ENCODE measurements at regions of chr16 and their contacts with region 1.

Region 1: GRCh38 chr16:57906382-57907316 is 64.3 kb downstream of the CNGB1 start:
- DNase-seq: peak in 2 of 3 donors; percentile 61 to 64
- H3K4me3 ChIP-seq: peak overlapping the region in 1 of 7 experiments; percentile 36
- H3K27ac ChIP-seq: no peak overlapping the region
- H3K4me1 ChIP-seq: peaks cover 0 to 7% (median 2%) of the 10 kb centered on the region in 4 experiments
- H3K27me3 ChIP-seq: peaks cover 0 to 2% (median 0%) of the 10 kb centered on the region in 5 experiments

Region 2: DNA sequence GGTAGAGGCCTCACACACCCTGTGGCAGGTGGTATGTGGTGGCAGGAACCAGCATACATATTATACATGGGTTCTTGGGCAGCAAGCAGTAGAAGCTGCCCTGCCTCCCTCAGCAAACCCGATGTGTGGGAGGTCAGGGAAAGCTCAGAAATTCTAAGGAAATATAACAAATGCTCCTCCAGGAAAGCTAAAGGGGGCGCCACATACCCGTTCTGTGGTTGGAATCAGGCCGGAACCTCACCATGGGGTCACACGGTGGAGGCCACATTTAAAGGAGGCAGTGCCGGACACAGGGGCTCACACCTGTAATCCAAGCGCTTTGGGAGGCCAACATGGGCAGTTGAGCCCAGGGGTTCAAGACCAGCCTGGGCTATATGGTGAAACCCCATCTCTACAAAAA is 183.5 kb before region 1 on chr16:
- CTCF ChIA-PET with region 1: no interaction called
- POLR2A ChIA-PET with region 1: no interaction called
- DNase-seq: no peak
- H3K4me3 ChIP-seq: no peak overlapping the region
- H3K27ac ChIP-seq: no peak overlapping the region
- H3K4me1 ChIP-seq: peaks cover 0 to 45% (median 10%) of the 10 kb centered on the region in 4 experiments
- H3K27me3 ChIP-seq: no peaks in the 10 kb centered on the region

Region 3: DNA sequence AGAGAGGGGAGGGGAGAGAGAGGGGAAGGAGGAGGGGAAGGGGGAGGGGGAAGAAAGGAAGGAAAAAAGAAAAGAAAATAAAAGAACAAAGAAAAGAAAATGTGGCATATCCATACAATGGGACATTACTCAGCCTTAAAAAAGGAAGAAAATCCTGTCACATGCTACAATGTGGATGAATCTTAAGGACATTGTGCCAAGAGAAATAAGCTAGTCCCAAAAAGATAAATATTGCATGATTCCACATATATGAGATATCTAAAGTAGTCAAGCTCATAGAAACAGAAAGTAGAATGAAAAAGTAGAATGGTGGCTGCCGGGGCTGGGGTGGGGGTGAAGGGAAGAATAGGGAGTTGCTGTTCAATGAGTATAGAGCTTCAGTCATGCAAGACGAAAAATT is 23.9 kb after region 1 on chr16:
- CTCF ChIA-PET with region 1: interaction called, 11 read pairs
- POLR2A ChIA-PET with region 1: no interaction called
- DNase-seq: no peak
- H3K4me3 ChIP-seq: no peak overlapping the region
- H3K27ac ChIP-seq: no peak overlapping the region
- H3K4me1 ChIP-seq: peaks cover 0 to 5% (median 2%) of the 10 kb centered on the region in 4 experiments
- H3K27me3 ChIP-seq: no peaks in the 10 kb centered on the region

Region 4: GRCh38 chr16:57994778-57995177 is 88.1 kb after region 1 on chr16:
- CTCF ChIA-PET with region 1: interaction called, 61 read pairs
- POLR2A ChIA-PET with region 1: no interaction called
- DNase-seq: peak; percentile 69 to 84 (median 83)
- H3K4me3 ChIP-seq: no peak overlapping the region
- H3K27ac ChIP-seq: no peak overlapping the region
- H3K4me1 ChIP-seq: peaks cover 4 to 28% (median 23%) of the 10 kb centered on the region in 4 experiments
- H3K27me3 ChIP-seq: no peaks in the 10 kb centered on the region

Region 5: GRCh38 chr16:58000706-58001676 is 94.3 kb after region 1 on chr16 and contains the start of gene USB1:
- CTCF ChIA-PET with region 1: interaction called, 61 read pairs
- POLR2A ChIA-PET with region 1: no interaction called
- DNase-seq: peak; percentile 92 to 94 (median 94)
- H3K4me3 ChIP-seq: peak within 1 kb of the TSS; percentile 70 to 89 (median 80)
- H3K27ac ChIP-seq: peak within 1 kb of the TSS in 1 of 2 experiments; percentile 77
- H3K4me1 ChIP-seq: peaks cover 4 to 35% (median 24%) of the 10 kb centered on the region in 4 experiments
- H3K27me3 ChIP-seq: no peaks in the 10 kb centered on the region

Region 6: DNA sequence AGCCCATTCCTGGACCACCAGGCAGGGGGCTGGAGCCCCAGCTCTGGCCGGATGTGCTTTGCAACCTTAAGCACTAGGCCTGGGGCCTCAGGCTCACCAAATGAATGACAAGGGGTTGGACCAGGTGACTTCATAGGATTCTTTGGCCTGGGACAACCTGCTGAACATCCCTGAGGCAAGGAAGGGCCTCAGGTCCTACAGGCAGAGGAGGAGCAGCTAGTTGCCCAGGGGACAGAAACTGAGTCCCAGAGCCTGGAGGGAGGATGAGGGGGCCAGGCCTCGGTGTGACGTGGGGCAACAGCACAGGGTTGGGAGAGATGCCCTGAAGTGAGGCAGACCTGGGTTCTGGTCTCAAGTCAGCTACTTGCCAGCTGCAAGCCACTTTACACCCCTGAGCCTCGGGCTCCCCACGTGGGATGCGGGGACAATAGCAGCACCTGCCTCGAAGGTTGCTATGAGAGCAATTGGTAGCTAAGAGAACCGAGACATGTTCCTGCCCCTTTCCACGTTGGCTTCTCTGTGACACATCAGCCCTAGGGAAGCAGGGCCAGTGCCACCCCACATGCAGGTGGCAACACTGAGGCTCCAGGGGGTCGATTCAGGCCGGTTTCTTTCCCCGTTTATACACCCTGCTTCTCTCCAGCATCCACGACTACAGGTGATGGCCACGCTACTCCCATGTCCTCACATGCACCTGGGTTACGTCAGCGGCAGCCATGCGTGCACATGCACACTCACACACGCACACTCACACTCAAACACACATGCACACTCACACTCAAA is 180.0 kb after region 1 on chr16:
- CTCF ChIA-PET with region 1: no interaction called
- POLR2A ChIA-PET with region 1: no interaction called
- DNase-seq: peak in 1 of 3 donors; percentile 22
- H3K4me3 ChIP-seq: no peak overlapping the region
- H3K27ac ChIP-seq: no peak overlapping the region
- H3K4me1 ChIP-seq: peaks cover 0 to 2% (median under 1%) of the 10 kb centered on the region in 4 experiments
- H3K27me3 ChIP-seq: no peaks in the 10 kb centered on the region

Region 7: DNA sequence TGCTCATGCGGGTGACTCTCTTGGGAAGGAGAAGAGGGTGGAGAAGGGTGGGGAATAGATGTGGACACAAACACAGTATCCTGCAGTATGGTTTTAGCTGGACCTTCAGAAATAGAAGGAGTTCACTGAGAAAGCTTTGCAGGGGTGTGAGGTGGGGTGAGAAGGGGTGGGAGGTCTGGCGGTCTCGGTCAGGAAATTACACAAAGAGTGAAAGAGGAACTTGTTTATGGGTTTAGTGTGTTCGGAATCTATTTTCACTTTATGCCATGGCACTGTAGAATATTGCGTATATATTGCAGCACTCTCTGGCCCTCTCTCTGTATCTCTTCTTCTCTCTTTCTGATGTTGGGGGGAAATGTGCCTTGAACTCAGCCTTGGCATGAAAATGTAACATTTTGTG is 975.6 kb after region 1 on chr16:
- CTCF ChIA-PET with region 1: no interaction called
- POLR2A ChIA-PET with region 1: no interaction called
- DNase-seq: peak; percentile 74 to 93 (median 91)
- H3K4me3 ChIP-seq: peak overlapping the region in 5 of 7 experiments; percentile 13 to 70 (median 48)
- H3K27ac ChIP-seq: peak overlapping the region; percentile 59 to 83
- H3K4me1 ChIP-seq: peaks cover 3 to 20% (median 16%) of the 10 kb centered on the region in 4 experiments
- H3K27me3 ChIP-seq: no peaks in the 10 kb centered on the region